ENCODE measurements at regions of chr5 and their contacts with region 1.

Region 1: DNA sequence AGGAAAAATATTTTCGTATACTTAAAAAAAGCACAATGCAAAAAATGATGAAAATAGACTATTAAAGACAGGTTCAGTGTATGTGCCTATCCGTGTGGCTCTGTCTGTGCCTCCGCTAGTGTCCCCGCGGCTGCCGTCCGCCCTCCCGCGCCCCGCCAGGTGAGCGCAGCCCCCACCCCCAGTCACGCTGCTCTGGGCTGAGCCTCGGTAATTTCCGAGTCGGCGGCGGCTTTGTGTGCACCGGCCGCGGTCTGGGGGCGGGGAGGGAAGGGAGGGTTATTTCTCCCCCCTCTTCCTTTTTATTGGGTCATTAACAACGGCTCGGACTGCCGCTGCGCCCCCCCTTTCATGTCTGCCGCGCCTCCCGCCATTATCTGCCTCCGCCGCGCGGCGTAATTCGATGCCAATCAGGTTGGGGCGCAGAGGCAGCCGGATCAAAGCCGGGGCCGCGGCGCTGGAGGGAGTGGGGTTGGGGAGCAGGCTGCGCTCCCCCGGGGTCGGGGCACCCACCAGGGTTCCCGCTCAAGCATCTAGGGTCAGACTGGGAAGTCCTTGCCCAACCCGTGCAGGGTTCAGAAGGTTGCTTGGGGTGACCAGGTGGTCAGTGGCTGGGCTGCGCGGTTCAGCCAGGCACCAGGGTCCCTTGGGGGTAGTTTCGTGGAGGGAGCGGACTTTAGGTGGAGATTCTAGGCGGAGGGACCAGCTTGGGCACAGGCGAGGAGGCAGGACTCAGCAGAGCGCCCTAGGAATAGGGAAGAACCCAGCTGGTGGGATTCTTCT is 39.5 kb upstream of the PSD2 start:
- DNase-seq: peak in 1 of 6 donors; percentile 66
- ATAC-seq: peak; percentile 15 to 55 (median 44)
- H3K4me3 ChIP-seq: peak overlapping the region in 3 of 4 donors; percentile 5 to 33 (median 18)
- H3K27ac ChIP-seq: no peak overlapping the region
- H3K4me1 ChIP-seq: peaks cover 7 to 14% (median 7%) of the 10 kb centered on the region in 3 donors
- H3K27me3 ChIP-seq: peaks cover 0 to 3% (median 0%) of the 10 kb centered on the region in 4 donors
- CTCF ChIP-seq: no peak

Region 2: GRCh38 chr5:139335811-139336210 is 420.3 kb before region 1 on chr5:
- intact Hi-C with region 1: no loop called
- DNase-seq: no peak
- ATAC-seq: peak in 1 of 4 donors; percentile 26
- H3K4me3 ChIP-seq: no peak overlapping the region
- H3K27ac ChIP-seq: no peak overlapping the region
- H3K4me1 ChIP-seq: peaks cover 0 to 2% (median 0%) of the 10 kb centered on the region in 3 donors
- H3K27me3 ChIP-seq: no peaks in the 10 kb centered on the region
- CTCF ChIP-seq: no peak

Region 3: GRCh38 chr5:139593716-139594319 is 162.3 kb before region 1 on chr5:
- intact Hi-C with region 1: no loop called
- DNase-seq: no peak
- ATAC-seq: peak in 3 of 4 donors; percentile 36 to 61 (median 61)
- H3K4me3 ChIP-seq: no peak overlapping the region
- H3K27ac ChIP-seq: peak overlapping the region in 1 of 4 donors; percentile 1
- H3K4me1 ChIP-seq: peaks cover 0 to 20% (median 5%) of the 10 kb centered on the region in 3 donors
- H3K27me3 ChIP-seq: no peaks in the 10 kb centered on the region
- CTCF ChIP-seq: no peak

Region 4: GRCh38 chr5:139611703-139612584 is 144.1 kb before region 1 on chr5:
- intact Hi-C with region 1: no loop called
- DNase-seq: no peak
- ATAC-seq: peak in 2 of 4 donors; percentile 12 to 22
- H3K4me3 ChIP-seq: no peak overlapping the region
- H3K27ac ChIP-seq: no peak overlapping the region
- H3K4me1 ChIP-seq: no peaks in the 10 kb centered on the region
- H3K27me3 ChIP-seq: no peaks in the 10 kb centered on the region
- CTCF ChIP-seq: no peak

Region 5: GRCh38 chr5:139708877-139709581 is 47.1 kb before region 1 on chr5:
- intact Hi-C with region 1: loop called in 1 of 3 experiments (anchors 10 kb)
- DNase-seq: peak; percentile 57 to 82 (median 74)
- ATAC-seq: peak; percentile 70 to 78 (median 72)
- H3K4me3 ChIP-seq: peak overlapping the region in 3 of 4 donors; percentile 18 to 56 (median 26)
- H3K27ac ChIP-seq: peak overlapping the region; percentile 19 to 71 (median 58)
- H3K4me1 ChIP-seq: peaks cover 3 to 4% (median 4%) of the 10 kb centered on the region in 3 donors
- H3K27me3 ChIP-seq: no peaks in the 10 kb centered on the region
- CTCF ChIP-seq: no peak

Region 6: GRCh38 chr5:140020601-140021177 is 264.6 kb after region 1 on chr5:
- intact Hi-C with region 1: no loop called
- DNase-seq: no peak
- ATAC-seq: peak; percentile 53 to 72 (median 58)
- H3K4me3 ChIP-seq: no peak overlapping the region
- H3K27ac ChIP-seq: no peak overlapping the region
- H3K4me1 ChIP-seq: peaks cover 11 to 22% (median 14%) of the 10 kb centered on the region in 3 donors
- H3K27me3 ChIP-seq: no peaks in the 10 kb centered on the region
- CTCF ChIP-seq: no peak

Measured in pancreas (tissue), 10 donors.